CD8-positive, alpha-beta T cell (primary cell): ENCODE measurements at regions of chr21 and their contacts with region 1.

Region 1: GRCh38 chr21:44364151-44365025 is 11.0 kb downstream of the TRPM2 start:
- DNase-seq: no peak
- ATAC-seq: no peak
- H3K4me3 ChIP-seq: no peak overlapping the region
- H3K4me3 Mint-ChIP-seq: no peak overlapping the region
- H3K27ac ChIP-seq: no peak overlapping the region
- H3K27ac Mint-ChIP-seq: no peak overlapping the region
- H3K4me1 ChIP-seq: no peaks in the 10 kb centered on the region
- H3K4me1 Mint-ChIP-seq: peaks cover 7% of the 10 kb centered on the region
- H3K27me3 ChIP-seq: peaks cover 0 to 3% of the 10 kb centered on the region in 2 experiments
- H3K27me3 Mint-ChIP-seq: peaks cover 3% of the 10 kb centered on the region
- CTCF ChIP-seq: no peak

Region 2: DNA sequence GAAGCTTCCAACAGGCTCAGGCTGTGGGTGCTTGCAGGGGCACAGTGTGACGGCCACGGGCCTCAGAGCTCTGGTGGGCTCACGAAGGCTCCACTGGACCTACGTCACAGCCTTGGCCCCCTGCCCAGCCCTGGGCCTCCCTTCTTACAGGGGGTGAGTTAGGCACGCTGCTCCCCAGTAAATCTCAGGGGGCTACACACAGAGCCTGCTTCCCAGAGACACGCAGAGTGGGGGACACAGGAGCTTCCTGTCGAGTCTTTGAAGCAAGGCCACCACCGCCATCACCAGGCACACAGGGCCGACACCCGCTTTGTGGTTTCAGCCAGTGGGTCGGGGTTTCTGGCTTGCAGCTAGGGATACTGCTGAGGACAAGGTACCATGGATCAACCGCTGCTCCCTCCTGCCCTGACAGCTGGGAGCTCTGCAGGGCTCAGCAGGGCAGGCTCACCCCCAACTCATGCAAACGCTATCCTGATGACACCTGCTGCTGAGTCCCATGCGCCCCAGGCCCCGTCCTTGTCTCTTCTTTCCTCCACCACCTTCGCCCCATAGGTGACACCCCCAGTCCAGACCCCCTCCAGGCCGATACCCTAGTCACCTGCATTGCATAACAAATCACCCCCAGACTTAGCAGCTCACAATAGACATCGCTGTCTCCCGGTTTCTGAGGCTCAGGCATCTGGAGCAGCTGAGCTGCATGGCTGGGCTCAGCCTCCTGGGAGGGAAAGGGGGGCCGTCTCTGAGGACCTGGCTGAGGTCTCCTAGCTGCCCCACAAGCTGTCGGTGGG is 19.7 kb before region 1 on chr21:
- CTCF ChIA-PET with region 1: no interaction called
- POLR2A ChIA-PET with region 1: no interaction called
- intact Hi-C with region 1: loop called in 1 of 2 experiments (anchors 1 kb)
- DNase-seq: no peak
- ATAC-seq: no peak
- H3K4me3 ChIP-seq: no peak overlapping the region
- H3K4me3 Mint-ChIP-seq: no peak overlapping the region
- H3K27ac ChIP-seq: no peak overlapping the region
- H3K27ac Mint-ChIP-seq: no peak overlapping the region
- H3K4me1 ChIP-seq: peaks cover 8% of the 10 kb centered on the region
- H3K4me1 Mint-ChIP-seq: peaks cover 16% of the 10 kb centered on the region
- H3K27me3 ChIP-seq: peaks cover 0 to 4% of the 10 kb centered on the region in 2 experiments
- H3K27me3 Mint-ChIP-seq: no peaks in the 10 kb centered on the region
- CTCF ChIP-seq: no peak